ENCODE measurements at regions of chr11 and their contacts with region 1.

Region 1: DNA sequence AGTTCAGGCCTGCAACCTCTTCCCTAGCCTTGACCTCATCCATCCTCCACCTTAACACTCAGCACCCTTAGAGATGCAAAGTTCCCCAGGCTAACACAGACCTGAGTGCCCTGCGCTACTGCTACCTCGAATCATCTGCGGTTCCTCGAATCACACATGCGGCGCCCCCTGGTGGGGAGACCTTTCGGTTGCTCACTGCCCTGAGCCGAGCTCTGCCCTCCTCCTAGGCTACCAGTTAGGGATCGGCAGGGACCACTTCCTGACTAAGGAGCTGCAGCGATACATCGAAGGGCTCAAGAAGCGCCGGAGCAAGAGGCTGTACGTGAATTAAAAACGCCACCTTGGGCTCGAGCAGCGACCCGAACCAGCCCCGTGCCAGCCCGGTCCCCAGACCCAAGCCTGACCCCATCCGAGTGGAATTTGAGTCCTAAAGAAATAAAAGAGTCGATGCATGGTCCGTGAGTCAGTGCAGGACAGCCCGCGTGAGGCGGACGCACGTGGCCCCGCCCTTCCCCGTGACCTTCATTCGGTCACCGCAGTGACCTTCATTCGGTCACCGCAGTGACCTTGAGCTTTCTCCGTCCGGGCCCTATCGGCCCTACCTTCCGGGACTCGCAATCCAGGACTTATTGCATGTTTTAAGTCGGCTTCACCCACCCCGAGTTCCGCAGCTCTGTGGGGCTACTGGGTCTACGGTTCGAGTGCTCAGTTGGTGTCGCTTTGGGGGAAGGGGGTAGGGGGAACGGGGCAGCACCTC is 830 bp upstream of the ESRRA start:
- DNase-seq: peak; percentile 87 to 90 (median 88)
- H3K4me3 ChIP-seq: peak overlapping the region; percentile 64
- H3K4me3 Mint-ChIP-seq: peak overlapping the region; percentile 88 to 97 (median 94)
- H3K27ac ChIP-seq: peak overlapping the region; percentile 90
- H3K27ac Mint-ChIP-seq: peak overlapping the region; percentile 91 to 99 (median 96)
- H3K4me1 ChIP-seq: peaks cover 41% of the 10 kb centered on the region
- H3K4me1 Mint-ChIP-seq: peaks cover 20 to 48% (median 31%) of the 10 kb centered on the region in 4 donors
- H3K27me3 ChIP-seq: peaks cover 20% of the 10 kb centered on the region
- H3K27me3 Mint-ChIP-seq: peaks cover 10 to 12% of the 10 kb centered on the region in 2 donors

Region 2: GRCh38 chr11:64196626-64197025 is 107.9 kb before region 1 on chr11:
- CTCF ChIA-PET with region 1: interaction called, 15 read pairs
- POLR2A ChIA-PET with region 1: interaction called, 4 read pairs
- intact Hi-C with region 1: no loop called
- DNase-seq: no peak
- H3K4me3 ChIP-seq: no peak overlapping the region
- H3K4me3 Mint-ChIP-seq: no peak overlapping the region
- H3K27ac ChIP-seq: no peak overlapping the region
- H3K27ac Mint-ChIP-seq: peak overlapping the region in 2 of 7 donors; percentile 68 to 70
- H3K4me1 ChIP-seq: peaks cover 5% of the 10 kb centered on the region
- H3K4me1 Mint-ChIP-seq: peaks cover 6 to 18% (median 10%) of the 10 kb centered on the region in 4 donors
- H3K27me3 ChIP-seq: no peaks in the 10 kb centered on the region
- H3K27me3 Mint-ChIP-seq: no peaks in the 10 kb centered on the region

Region 3: GRCh38 chr11:64233913-64234834 is 70.3 kb before region 1 on chr11 and contains the start of gene VEGFB:
- CTCF ChIA-PET with region 1: interaction called, 12 read pairs
- POLR2A ChIA-PET with region 1: interaction called, 10 read pairs
- intact Hi-C with region 1: loop called (anchors 1 kb)
- DNase-seq: peak; percentile 62 to 76 (median 66)
- H3K4me3 ChIP-seq: peak within 1 kb of the TSS; percentile 57 to 58
- H3K4me3 Mint-ChIP-seq: peak within 1 kb of the TSS; percentile 79 to 87 (median 82)
- H3K27ac ChIP-seq: peak within 1 kb of the TSS; percentile 71
- H3K27ac Mint-ChIP-seq: peak within 1 kb of the TSS; percentile 73 to 94 (median 91)
- H3K4me1 ChIP-seq: peaks cover 40% of the 10 kb centered on the region
- H3K4me1 Mint-ChIP-seq: peaks cover 14 to 51% (median 34%) of the 10 kb centered on the region in 4 donors
- H3K27me3 ChIP-seq: no peaks in the 10 kb centered on the region
- H3K27me3 Mint-ChIP-seq: no peaks in the 10 kb centered on the region
- total RNA-seq, gene VEGFB: 96.8 to 97.3 TPM

Region 4: GRCh38 chr11:64269380-64270234 is 34.9 kb before region 1 on chr11:
- CTCF ChIA-PET with region 1: interaction called, 92 read pairs
- POLR2A ChIA-PET with region 1: interaction called, 128 read pairs
- intact Hi-C with region 1: loop called (anchors 1 kb)
- DNase-seq: peak; percentile 98
- H3K4me3 ChIP-seq: peak overlapping the region; percentile 93 to 98
- H3K4me3 Mint-ChIP-seq: peak overlapping the region; percentile 93 to 100 (median 96)
- H3K27ac ChIP-seq: peak overlapping the region; percentile 93
- H3K27ac Mint-ChIP-seq: peak overlapping the region; percentile 98 to 100 (median 99)
- H3K4me1 ChIP-seq: peaks cover 20% of the 10 kb centered on the region
- H3K4me1 Mint-ChIP-seq: peaks cover 9 to 36% (median 19%) of the 10 kb centered on the region in 4 donors
- H3K27me3 ChIP-seq: no peaks in the 10 kb centered on the region
- H3K27me3 Mint-ChIP-seq: peaks cover 0 to 4% of the 10 kb centered on the region in 2 donors

Region 5: DNA sequence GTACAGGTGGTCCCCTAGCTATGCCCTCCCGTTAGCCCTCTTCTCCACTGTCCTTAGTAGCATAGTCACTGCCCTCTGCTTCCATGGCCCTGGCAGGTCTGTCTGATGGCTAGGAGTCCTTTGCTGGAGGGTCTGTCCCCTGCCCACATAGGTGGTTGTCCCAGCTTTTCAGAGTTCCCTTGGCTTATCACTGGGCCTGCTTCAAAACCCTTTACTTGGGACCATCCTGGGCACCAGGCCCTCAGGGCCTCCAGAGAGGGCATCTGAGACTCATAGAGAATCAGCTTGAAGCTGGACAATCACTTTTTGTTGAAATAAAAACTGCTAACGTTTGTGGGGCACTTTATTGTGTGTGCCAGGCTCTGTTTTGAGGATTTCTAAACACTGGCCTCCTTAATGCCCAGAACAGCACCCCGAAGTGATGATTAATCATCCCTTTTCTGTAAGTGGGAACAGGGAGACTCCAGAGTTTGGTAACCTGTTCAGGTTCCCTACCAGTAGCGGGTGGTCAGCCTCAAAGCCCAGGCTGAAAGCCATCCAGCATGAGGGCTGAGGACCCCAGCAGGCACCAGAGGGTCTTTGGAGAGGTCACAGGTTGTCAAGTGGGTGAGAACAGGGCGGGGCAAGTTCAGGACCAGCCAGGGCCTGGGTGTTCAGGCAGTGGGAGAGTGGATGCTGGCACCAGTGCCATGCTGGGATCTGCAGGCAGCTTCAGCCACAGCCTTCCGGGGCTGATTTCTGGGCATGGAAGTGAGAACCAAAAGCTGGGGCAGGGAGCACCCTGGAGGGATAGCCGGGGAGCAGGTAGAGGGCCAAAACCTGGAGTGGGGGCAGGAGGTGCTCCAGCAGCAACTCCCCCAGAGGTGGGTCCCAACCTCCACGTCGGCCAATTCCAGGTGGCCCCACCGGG is 13.9 kb before region 1 on chr11:
- CTCF ChIA-PET with region 1: interaction called, 47 read pairs
- POLR2A ChIA-PET with region 1: interaction called, 81 read pairs
- intact Hi-C with region 1: loop called (anchors 1 kb)
- DNase-seq: peak in 1 of 5 donors; percentile 32
- H3K4me3 ChIP-seq: no peak overlapping the region
- H3K4me3 Mint-ChIP-seq: peak overlapping the region; percentile 43 to 80 (median 72)
- H3K27ac ChIP-seq: no peak overlapping the region
- H3K27ac Mint-ChIP-seq: peak overlapping the region in 2 of 7 donors; percentile 15 to 35
- H3K4me1 ChIP-seq: peaks cover 19% of the 10 kb centered on the region
- H3K4me1 Mint-ChIP-seq: peaks cover 6 to 22% (median 13%) of the 10 kb centered on the region in 4 donors
- H3K27me3 ChIP-seq: peaks cover 32% of the 10 kb centered on the region
- H3K27me3 Mint-ChIP-seq: peaks cover 22 to 28% of the 10 kb centered on the region in 2 donors

Region 6: DNA sequence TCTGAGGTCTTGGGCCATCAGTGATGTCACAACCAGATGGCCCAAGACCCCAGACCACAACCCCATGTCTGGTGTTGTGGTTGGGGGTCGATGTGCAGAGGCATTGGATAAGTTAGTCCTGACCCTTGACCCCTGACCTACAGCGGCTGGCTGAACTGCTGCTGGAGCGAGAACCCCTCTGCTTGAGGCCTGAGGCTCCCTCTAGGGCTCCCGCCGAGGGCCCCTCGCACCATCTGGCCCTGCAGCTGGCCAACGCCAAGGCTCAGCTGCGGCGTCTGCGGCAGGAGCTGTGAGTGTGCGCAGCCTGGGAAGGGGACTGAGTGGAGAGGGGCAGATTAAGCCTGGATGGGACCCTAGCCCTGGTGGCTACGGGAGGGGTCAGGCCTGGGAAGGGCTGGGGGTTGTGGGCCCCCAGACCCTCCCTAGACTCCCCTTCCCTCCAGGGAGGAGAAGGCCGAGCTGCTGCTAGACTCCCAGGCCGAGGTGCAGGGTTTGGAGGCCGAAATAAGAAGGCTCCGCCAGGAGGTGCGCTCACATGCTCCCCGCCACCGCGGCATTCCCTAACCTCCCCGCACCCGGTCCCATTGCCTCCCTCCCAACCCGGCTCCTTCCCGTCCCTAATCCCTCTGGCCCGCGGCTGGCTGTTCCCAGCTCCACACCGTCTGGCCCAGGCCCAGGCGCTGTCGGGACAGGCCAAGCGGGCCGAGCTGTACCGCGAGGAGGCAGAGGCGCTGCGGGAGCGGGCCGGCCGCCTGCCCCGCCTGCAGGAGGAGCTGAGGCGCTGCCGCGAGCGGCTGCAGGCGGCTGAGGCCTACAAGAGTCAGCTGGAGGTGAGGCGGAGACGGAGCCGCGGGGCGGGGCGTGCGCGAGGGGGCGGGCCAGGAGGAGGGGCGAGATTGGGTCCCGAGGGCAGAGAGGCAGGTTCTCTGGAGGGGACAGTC is 37.6 kb after region 1 on chr11:
- CTCF ChIA-PET with region 1: no interaction called
- POLR2A ChIA-PET with region 1: interaction called, 4 read pairs
- intact Hi-C with region 1: loop called (anchors 1 kb)
- DNase-seq: peak; percentile 87 to 91 (median 89)
- H3K4me3 ChIP-seq: no peak overlapping the region
- H3K4me3 Mint-ChIP-seq: peak overlapping the region in 7 of 8 donors; percentile 39 to 93 (median 63)
- H3K27ac ChIP-seq: peak overlapping the region; percentile 42
- H3K27ac Mint-ChIP-seq: peak overlapping the region in 6 of 7 donors; percentile 48 to 88 (median 76)
- H3K4me1 ChIP-seq: peaks cover 44% of the 10 kb centered on the region
- H3K4me1 Mint-ChIP-seq: peaks cover 21 to 51% (median 36%) of the 10 kb centered on the region in 4 donors
- H3K27me3 ChIP-seq: no peaks in the 10 kb centered on the region
- H3K27me3 Mint-ChIP-seq: no peaks in the 10 kb centered on the region

Region 7: DNA sequence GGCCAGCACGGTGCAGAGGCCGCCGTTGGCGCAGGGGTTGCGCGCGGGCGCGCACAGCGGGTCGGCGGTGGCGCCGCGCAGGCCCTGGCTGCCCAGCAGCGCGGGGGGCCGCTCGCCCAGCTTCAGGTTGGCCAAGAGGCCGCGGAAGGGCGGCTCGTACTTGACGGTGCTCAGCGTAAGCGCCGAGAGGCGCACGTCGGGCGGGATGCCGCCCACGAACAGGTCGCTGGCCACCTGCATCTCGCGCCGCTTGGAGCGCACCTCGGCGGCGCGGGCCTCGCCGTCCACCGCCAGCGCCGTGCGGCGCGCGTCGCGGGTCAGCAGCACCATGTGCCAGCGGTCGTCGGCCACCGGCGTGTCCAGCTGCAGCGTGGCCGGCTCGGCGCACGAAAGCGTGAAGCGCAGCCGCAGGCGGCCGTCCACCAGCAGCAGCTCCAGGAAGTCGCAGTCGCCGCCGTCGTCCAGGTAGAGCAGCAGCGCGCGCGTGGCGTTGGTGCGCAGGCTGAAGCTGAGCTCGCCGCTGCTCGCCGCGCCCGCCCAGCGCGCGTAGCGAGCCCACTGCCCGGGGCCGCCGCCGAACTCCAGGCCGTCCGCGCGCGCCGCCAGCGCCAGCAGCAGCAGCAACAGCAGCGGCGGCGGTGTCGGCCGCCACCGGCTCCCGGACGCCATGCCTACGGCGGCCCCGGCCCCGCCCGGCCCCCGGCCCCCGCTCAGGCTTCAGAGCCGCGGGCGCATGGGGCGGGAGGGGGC is 408.7 kb after region 1 on chr11:
- CTCF ChIA-PET with region 1: no interaction called
- POLR2A ChIA-PET with region 1: no interaction called
- intact Hi-C with region 1: no loop called
- DNase-seq: peak in 3 of 5 donors; percentile 18 to 28 (median 23)
- H3K4me3 ChIP-seq: no peak overlapping the region
- H3K4me3 Mint-ChIP-seq: no peak overlapping the region
- H3K27ac ChIP-seq: no peak overlapping the region
- H3K27ac Mint-ChIP-seq: no peak overlapping the region
- H3K4me1 ChIP-seq: no peaks in the 10 kb centered on the region
- H3K4me1 Mint-ChIP-seq: peaks cover 6 to 28% (median 15%) of the 10 kb centered on the region in 4 donors
- H3K27me3 ChIP-seq: peaks cover 47% of the 10 kb centered on the region
- H3K27me3 Mint-ChIP-seq: peaks cover 59 to 69% of the 10 kb centered on the region in 2 donors

Measured in CD4-positive, alpha-beta memory T cell (primary cell).